ENCODE measurements at regions of chr7 and their contacts with region 1.

Region 1: DNA sequence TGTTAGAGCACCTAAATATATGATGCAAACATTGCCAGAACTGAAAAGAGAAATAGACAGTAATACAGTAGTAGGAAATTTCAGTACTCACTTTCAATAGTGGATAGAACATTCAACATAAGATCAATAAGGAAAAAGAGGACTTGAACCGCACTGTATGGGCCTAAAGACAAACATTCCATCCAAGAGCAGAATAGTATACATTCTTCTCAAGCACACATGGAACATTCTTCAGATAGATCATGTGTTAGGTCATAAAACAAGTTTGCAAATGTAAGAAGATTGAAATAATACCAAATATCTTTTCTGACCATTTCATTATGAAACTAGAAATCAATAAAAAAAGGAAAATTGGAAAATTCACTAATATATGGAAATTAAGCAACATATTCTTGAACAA is 185.4 kb upstream of the FOXP2 start:
- DNase-seq: no peak
- ATAC-seq: no peak
- H3K4me3 ChIP-seq: no peak overlapping the region
- H3K27ac ChIP-seq: no peak overlapping the region
- H3K4me1 ChIP-seq: no peaks in the 10 kb centered on the region
- H3K27me3 ChIP-seq: no peaks in the 10 kb centered on the region
- CTCF ChIP-seq: no peak
- POLR2A ChIP-seq: no peak
- RAD21 ChIP-seq: no peak

Region 2: GRCh38 chr7:114033475-114033874 is 195.8 kb before region 1 on chr7:
- CTCF ChIA-PET with region 1: no interaction called
- POLR2A ChIA-PET with region 1: no interaction called
- RAD21 ChIA-PET with region 1: no interaction called
- intact Hi-C with region 1: loop called (anchors 10 kb)
- DNase-seq: no peak
- ATAC-seq: no peak
- H3K4me3 ChIP-seq: no peak overlapping the region
- H3K27ac ChIP-seq: no peak overlapping the region
- H3K4me1 ChIP-seq: no peaks in the 10 kb centered on the region
- H3K27me3 ChIP-seq: no peaks in the 10 kb centered on the region
- CTCF ChIP-seq: no peak
- POLR2A ChIP-seq: no peak
- RAD21 ChIP-seq: no peak

Measured in HCT116 (cell line).